H1 (cell line): ENCODE measurements at regions of chr14 and their contacts with region 1.

Region 1: DNA sequence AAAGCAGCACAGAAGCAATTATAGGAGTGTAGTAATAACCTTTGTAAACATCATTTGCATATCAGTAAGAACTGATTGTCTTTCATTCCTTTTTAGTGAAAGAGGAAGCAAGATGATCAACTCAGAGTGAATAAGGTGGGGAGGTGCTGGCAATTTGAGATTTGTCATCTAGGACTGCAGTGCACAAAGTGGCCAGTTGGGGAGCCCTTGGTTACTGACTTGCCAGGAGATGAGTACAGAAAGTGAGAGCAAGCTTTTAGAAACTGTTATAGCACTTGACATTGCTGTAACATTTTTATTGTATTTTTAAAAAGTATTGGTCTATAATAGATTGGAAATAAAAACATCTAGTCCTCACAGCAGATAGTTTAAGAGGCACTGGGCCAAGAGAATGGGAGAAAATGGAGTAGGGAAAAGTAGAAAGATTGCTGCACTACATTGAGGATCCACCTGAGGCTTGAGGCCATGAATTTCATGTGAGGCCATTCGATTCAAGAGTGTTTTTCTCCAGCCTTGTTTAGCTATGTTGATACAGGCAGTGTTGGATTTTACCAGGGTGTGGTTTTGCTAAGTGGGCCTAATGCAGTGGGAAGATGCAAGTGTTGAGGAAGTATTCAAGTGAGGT is 98.2 kb downstream of the SNAPC1 start:
- DNase-seq: peak in 1 of 2 experiments; percentile 82
- H3K4me3 ChIP-seq: no peak overlapping the region
- H3K27ac ChIP-seq: no peak overlapping the region
- H3K4me1 ChIP-seq: no peaks in the 10 kb centered on the region
- H3K27me3 ChIP-seq: no peaks in the 10 kb centered on the region
- CTCF ChIP-seq: peak; percentile 55 to 68 (median 57)
- EP300 ChIP-seq: no peak
- POLR2A ChIP-seq: no peak
- RAD21 ChIP-seq: peak; percentile 57 to 62

Region 2: DNA sequence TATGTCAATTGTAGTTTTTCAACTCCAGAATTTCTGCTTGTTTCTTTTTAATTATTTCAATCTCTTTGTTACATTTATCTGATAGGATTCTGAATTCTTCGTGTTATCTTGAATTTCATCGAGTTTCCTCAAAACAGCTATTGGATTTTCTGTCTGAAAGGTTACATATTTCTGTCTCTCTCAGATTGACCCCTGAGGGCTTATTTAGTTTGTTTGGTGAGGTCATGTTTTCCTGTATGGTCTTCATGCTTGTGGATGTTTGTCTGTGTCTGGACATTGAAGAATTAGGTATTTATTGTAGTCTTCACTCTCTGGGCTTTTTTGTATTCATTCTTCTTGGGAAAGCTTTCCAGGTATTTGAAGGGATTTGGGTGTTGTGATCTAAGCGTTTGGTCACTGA is 12.5 kb before region 1 on chr14:
- CTCF ChIA-PET with region 1: interaction called, 14 read pairs
- POLR2A ChIA-PET with region 1: no interaction called
- DNase-seq: no peak
- H3K4me3 ChIP-seq: no peak overlapping the region
- H3K27ac ChIP-seq: no peak overlapping the region
- H3K4me1 ChIP-seq: no peaks in the 10 kb centered on the region
- H3K27me3 ChIP-seq: no peaks in the 10 kb centered on the region
- CTCF ChIP-seq: no peak
- EP300 ChIP-seq: no peak
- POLR2A ChIP-seq: no peak
- RAD21 ChIP-seq: no peak

Region 3: GRCh38 chr14:61872452-61872851 is 12.0 kb after region 1 on chr14:
- CTCF ChIA-PET with region 1: interaction called, 16 read pairs
- POLR2A ChIA-PET with region 1: no interaction called
- DNase-seq: no peak
- H3K4me3 ChIP-seq: no peak overlapping the region
- H3K27ac ChIP-seq: no peak overlapping the region
- H3K4me1 ChIP-seq: no peaks in the 10 kb centered on the region
- H3K27me3 ChIP-seq: no peaks in the 10 kb centered on the region
- CTCF ChIP-seq: no peak
- EP300 ChIP-seq: no peak
- POLR2A ChIP-seq: no peak
- RAD21 ChIP-seq: no peak

Region 4: DNA sequence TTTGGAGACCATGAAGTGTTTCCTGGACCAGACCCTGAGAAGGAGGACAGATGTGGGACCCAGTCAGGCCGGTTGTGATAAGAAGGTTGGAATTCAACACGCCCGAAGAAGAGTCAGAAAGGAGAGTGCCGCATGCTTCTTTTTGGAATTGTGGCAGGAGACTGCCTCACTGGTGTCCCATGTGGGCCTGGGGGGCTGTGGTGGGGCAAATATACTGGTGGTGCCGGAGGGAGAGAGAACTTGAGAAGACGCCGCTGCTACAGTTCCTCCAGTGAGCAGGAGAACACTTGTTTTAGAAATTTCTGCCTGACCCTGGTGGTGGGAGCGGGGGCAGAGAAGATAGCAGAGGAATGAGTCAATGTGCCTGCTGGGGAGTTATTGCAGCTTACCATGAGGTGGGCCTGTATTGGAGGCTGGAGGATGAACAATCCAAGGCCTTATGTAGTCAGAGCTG is 113.5 kb after region 1 on chr14:
- CTCF ChIA-PET with region 1: no interaction called
- POLR2A ChIA-PET with region 1: no interaction called
- DNase-seq: no peak
- H3K4me3 ChIP-seq: no peak overlapping the region
- H3K27ac ChIP-seq: no peak overlapping the region
- H3K4me1 ChIP-seq: 0 out of 7 replicates have a peak, but pooled peaks cover 0 to 2% (median 0%) of the 10 kb centered on the region in 4 experiments
- H3K27me3 ChIP-seq: no peaks in the 10 kb centered on the region
- CTCF ChIP-seq: no peak
- EP300 ChIP-seq: no peak
- POLR2A ChIP-seq: no peak
- RAD21 ChIP-seq: no peak